Activated CD8-positive, alpha-beta T cell treated with anti-CD3 and anti-CD28 coated beads for 36 hours (primary cell): ENCODE measurements at regions of chr3 and their contacts with region 1.

Region 1: DNA sequence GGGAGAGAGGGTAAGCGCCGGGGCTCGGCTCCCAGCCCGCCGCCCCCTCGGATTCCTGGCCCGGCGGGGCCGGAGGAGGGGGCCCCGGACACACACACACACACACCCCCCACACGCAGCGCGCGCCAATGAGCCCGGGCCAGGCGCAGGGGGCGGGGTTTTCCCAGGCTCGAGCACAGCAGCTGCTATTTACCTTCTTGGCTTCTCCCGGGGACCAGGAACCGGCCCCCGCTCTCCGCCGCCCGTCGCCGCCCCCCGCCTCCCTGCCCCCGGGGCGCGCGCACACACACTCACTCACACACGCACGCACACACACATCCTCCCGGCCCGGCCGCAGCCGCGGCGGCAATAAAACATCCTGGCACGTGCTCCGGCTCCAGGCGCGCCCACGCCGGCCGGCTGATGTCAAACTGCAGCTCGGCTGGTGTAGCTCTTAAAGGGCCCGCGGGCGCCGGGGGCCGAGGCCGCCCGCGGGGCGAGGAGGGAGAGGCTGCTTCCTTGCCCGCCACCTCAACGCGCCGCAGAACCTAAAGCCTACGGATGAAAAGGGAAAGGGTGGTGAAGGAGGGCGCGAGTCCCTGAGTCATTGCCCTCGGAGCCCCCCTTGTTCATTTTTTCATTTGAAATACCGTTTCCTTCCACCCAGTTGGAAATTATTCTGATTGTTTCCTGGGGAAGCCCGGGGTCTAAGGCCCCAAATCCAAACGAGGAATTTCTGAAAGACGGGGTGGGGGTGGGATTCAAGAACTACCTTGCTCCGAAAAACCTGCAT is 1.0 kb upstream of the HES1 start:
- DNase-seq: peak; percentile 92
- ATAC-seq: peak; percentile 58
- H3K4me3 Mint-ChIP-seq: peak overlapping the region; percentile 63
- H3K27ac Mint-ChIP-seq: peak overlapping the region; percentile 75
- H3K4me1 Mint-ChIP-seq: peaks cover 39% of the 10 kb centered on the region
- H3K27me3 Mint-ChIP-seq: peaks cover 72% of the 10 kb centered on the region
- CTCF ChIP-seq: no peak

Region 2: DNA sequence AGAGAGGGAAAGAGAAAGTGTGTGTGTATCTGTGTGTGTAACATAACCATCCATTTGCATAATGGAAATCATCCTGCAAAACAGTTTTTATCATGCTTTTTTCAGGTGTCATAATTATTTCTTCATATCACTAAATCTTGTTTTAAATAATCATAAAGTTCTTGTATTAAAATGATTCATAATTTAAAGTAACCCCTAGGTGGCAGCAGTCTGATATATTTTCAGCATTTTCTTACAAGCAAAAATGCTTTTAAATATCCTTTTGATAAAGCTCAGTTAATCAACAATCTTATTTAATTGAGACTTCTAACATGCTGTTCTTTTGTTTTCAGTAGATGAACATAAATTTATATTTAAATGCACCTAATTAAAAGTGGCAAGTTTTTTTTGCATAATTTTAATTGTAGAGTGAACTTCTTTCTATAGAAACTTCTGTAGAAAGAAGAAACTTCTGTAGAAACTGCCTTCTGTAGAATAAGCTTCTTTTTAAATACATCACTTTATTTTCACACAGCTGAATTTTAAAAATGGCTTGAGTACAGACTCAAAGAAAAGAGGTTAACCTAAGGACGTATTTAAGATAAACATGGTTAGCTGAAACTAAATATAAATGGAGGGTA is 469.5 kb before region 1 on chr3:
- CTCF ChIA-PET with region 1: no interaction called
- POLR2A ChIA-PET with region 1: no interaction called
- intact Hi-C with region 1: loop called (anchors 10 kb)
- DNase-seq: no peak
- ATAC-seq: no peak
- H3K4me3 Mint-ChIP-seq: no peak overlapping the region
- H3K27ac Mint-ChIP-seq: no peak overlapping the region
- H3K4me1 Mint-ChIP-seq: no peaks in the 10 kb centered on the region
- H3K27me3 Mint-ChIP-seq: no peaks in the 10 kb centered on the region
- CTCF ChIP-seq: peak; percentile 74

Region 3: DNA sequence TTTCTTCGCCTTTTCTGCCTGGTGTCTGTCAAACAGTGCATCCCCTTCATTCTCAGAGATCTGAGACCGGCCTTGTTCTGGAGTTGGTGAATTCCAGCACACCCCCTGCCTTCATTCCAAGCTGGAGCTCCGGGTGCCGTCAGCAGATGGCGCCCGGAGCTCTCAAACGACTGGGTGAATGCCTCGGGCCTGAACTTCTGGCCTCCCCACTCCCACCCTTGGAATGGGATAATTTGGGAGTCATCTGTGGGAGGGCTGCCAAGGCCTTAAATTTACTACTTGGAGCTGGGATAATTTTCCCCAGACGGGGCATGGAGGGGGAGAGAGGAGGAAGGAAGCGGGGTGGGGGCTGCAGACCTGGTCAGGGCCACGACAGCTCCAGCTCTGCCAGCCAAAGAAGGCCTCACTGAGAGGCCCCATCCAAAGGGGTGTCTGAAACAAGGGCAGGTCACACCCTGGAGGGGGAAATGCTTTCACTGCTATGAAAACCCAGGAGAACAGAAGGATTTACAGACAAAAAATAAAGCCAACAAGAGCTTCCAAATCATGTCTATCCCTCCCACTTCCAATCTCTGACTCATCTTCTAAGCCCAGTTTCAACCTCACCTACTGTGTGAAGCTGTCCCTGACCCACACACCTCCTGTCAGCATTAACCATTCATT is 354.0 kb before region 1 on chr3:
- CTCF ChIA-PET with region 1: interaction called, 9 read pairs
- POLR2A ChIA-PET with region 1: no interaction called
- intact Hi-C with region 1: loop called (anchors 5 kb)
- DNase-seq: peak; percentile 44
- ATAC-seq: peak; percentile 39
- H3K4me3 Mint-ChIP-seq: no peak overlapping the region
- H3K27ac Mint-ChIP-seq: no peak overlapping the region
- H3K4me1 Mint-ChIP-seq: peaks cover 4% of the 10 kb centered on the region
- H3K27me3 Mint-ChIP-seq: peaks cover 31% of the 10 kb centered on the region
- CTCF ChIP-seq: peak; percentile 64

Region 4: GRCh38 chr3:193872265-193872753 is 262.6 kb before region 1 on chr3:
- CTCF ChIA-PET with region 1: no interaction called
- POLR2A ChIA-PET with region 1: no interaction called
- intact Hi-C with region 1: loop called (anchors 10 kb)
- DNase-seq: peak; percentile 30
- ATAC-seq: no peak
- H3K4me3 Mint-ChIP-seq: no peak overlapping the region
- H3K27ac Mint-ChIP-seq: no peak overlapping the region
- H3K4me1 Mint-ChIP-seq: peaks cover 6% of the 10 kb centered on the region
- H3K27me3 Mint-ChIP-seq: peaks cover 23% of the 10 kb centered on the region
- CTCF ChIP-seq: no peak

Region 5: DNA sequence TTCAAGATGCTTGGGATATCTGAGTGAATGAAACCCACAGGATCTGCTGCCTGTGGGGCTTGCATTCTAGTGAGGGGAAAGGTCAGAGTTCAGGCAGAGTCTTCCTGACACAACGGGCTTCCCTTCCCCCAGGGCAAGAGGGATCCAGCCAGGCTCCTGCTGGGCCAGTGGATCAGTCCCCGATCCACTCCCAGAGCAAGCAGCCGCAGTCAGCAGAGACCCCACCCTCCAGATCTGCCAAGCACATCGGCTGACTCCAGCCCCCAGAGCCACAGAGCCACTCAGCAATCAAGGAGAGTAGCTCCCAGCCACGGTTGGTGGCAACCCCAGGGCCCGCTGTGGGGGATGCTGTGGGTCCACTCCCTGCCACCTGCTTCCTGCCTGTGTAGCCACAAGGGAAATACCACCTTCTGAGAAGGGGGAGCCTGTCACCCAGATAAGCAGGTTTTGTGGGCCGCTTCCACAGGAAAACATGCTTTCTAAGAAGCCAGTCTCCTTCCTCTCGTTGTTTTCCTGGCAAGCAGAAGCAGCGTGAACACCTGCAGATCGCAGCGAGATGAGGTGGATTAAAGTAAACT is 171.3 kb after region 1 on chr3:
- CTCF ChIA-PET with region 1: no interaction called
- POLR2A ChIA-PET with region 1: no interaction called
- intact Hi-C with region 1: loop called (anchors 5 kb)
- DNase-seq: peak; percentile 84
- ATAC-seq: peak; percentile 67
- H3K4me3 Mint-ChIP-seq: peak overlapping the region; percentile 30
- H3K27ac Mint-ChIP-seq: peak overlapping the region; percentile 87
- H3K4me1 Mint-ChIP-seq: peaks cover 35% of the 10 kb centered on the region
- H3K27me3 Mint-ChIP-seq: peaks cover 18% of the 10 kb centered on the region
- CTCF ChIP-seq: no peak

Region 6: GRCh38 chr3:194315088-194315964 is 180.4 kb after region 1 on chr3:
- CTCF ChIA-PET with region 1: interaction called, 12 read pairs
- POLR2A ChIA-PET with region 1: no interaction called
- intact Hi-C with region 1: no loop called
- DNase-seq: peak; percentile 80
- ATAC-seq: peak; percentile 81
- H3K4me3 Mint-ChIP-seq: peak overlapping the region; percentile 56
- H3K27ac Mint-ChIP-seq: no peak overlapping the region
- H3K4me1 Mint-ChIP-seq: peaks cover 8% of the 10 kb centered on the region
- H3K27me3 Mint-ChIP-seq: peaks cover 53% of the 10 kb centered on the region
- CTCF ChIP-seq: peak; percentile 96